Posterior cingulate gyrus (tissue), 11 donors: ENCODE measurements at regions of chr3 and their contacts with region 1.

Region 1: GRCh38 chr3:42547401-42547945 is 34.3 kb downstream of the SEC22C start:
- DNase-seq: peak; percentile 53 to 97 (median 80)

Region 2: GRCh38 chr3:42247576-42248027 is 299.9 kb before region 1 on chr3:
- intact Hi-C with region 1: loop called (anchors 5 kb)
- DNase-seq: peak in 8 of 10 donors; percentile 46 to 90 (median 72)

Region 3: DNA sequence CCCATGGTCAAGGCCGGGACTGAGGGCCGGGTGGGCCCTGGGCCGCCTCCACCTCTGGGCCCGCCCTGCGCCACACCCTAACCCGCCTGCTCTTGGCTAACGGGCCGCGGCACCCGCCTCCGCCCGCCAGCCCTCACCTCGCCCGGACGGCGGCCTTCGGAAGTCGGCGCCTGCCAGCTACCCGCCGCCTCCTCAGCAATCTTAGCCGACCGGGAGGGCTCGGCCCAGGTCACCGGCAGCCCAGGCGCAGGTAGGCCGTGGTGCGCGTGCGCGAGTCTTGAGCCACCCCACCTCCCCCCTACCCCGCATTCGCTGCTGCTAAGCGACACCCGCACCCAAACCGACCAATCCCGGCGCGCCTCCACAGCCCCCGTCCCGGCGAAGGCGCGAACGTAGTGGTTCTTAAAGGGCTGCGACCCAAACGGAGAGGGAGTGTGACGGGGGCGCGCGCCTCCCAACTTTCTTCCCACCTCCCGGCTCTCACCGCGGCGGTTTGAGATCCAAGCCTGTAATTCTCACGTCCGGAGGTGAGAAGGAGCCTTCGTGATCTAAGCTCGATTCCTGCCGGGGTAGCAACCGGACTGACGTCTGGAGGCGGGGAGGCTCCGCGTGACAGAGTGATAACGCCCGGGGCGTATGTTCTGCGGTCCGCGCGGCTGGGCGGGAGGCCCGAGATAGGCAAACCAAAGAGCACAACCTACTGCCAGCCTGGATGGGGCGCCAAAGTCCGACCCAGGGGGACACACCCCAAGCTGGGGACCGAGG is 34.4 kb after region 1 on chr3 and contains the start of gene SEC22C:
- intact Hi-C with region 1: no loop called
- DNase-seq: peak; percentile 95 to 100 (median 98)